ENCODE measurements at regions of chr16 and their contacts with region 1.

Region 1: GRCh38 chr16:31440516-31441184 is 1.9 kb downstream of the ZNF843 start:
- DNase-seq: no peak
- H3K4me3 ChIP-seq: no peak overlapping the region
- H3K27ac ChIP-seq: no peak overlapping the region
- H3K4me1 ChIP-seq: peaks cover 0 to 11% (median 4%) of the 10 kb centered on the region in 4 donors
- H3K27me3 ChIP-seq: no peaks in the 10 kb centered on the region
- CTCF ChIP-seq: no peak
- EP300 ChIP-seq: no peak
- POLR2A ChIP-seq: no peak

Region 2: GRCh38 chr16:30997000-30997886 is 443.4 kb before region 1 on chr16:
- in situ Hi-C with region 1: loop called in 3 of 4 experiments (anchors 10 to 25 kb)
- intact Hi-C with region 1: no loop called
- DNase-seq: peak; percentile 87
- H3K4me3 ChIP-seq: peak overlapping the region; percentile 39 to 56 (median 48)
- H3K27ac ChIP-seq: peak overlapping the region; percentile 77 to 89 (median 81)
- H3K4me1 ChIP-seq: peaks cover 6 to 18% (median 13%) of the 10 kb centered on the region in 4 donors
- H3K27me3 ChIP-seq: peaks cover 5% of the 10 kb centered on the region
- CTCF ChIP-seq: no peak
- EP300 ChIP-seq: no peak
- POLR2A ChIP-seq: peak; percentile 62

Region 3: GRCh38 chr16:31179747-31180459 is 260.7 kb before region 1 on chr16 and contains the start of gene FUS:
- in situ Hi-C with region 1: loop called in 1 of 4 experiments (anchors 25 kb)
- intact Hi-C with region 1: loop called (anchors 10 kb)
- DNase-seq: peak; percentile 94
- H3K4me3 ChIP-seq: peak within 1 kb of the TSS; percentile 70 to 99 (median 94)
- H3K27ac ChIP-seq: peak within 1 kb of the TSS; percentile 96 to 99 (median 98)
- H3K4me1 ChIP-seq: peaks cover 19 to 41% (median 32%) of the 10 kb centered on the region in 4 donors
- H3K27me3 ChIP-seq: no peaks in the 10 kb centered on the region
- CTCF ChIP-seq: no peak
- EP300 ChIP-seq: no peak
- POLR2A ChIP-seq: peak; percentile 100
- total RNA-seq, gene FUS: 43.6 to 116 (median 59.0) TPM

Region 4: GRCh38 chr16:31196324-31197088 is 244.1 kb before region 1 on chr16:
- in situ Hi-C with region 1: loop called in 2 of 4 experiments (anchors 10 to 25 kb)
- intact Hi-C with region 1: no loop called
- DNase-seq: no peak
- H3K4me3 ChIP-seq: no peak overlapping the region
- H3K27ac ChIP-seq: no peak overlapping the region
- H3K4me1 ChIP-seq: peaks cover 7 to 19% (median 11%) of the 10 kb centered on the region in 4 donors
- H3K27me3 ChIP-seq: no peaks in the 10 kb centered on the region
- CTCF ChIP-seq: no peak
- EP300 ChIP-seq: no peak
- POLR2A ChIP-seq: no peak

Region 5: DNA sequence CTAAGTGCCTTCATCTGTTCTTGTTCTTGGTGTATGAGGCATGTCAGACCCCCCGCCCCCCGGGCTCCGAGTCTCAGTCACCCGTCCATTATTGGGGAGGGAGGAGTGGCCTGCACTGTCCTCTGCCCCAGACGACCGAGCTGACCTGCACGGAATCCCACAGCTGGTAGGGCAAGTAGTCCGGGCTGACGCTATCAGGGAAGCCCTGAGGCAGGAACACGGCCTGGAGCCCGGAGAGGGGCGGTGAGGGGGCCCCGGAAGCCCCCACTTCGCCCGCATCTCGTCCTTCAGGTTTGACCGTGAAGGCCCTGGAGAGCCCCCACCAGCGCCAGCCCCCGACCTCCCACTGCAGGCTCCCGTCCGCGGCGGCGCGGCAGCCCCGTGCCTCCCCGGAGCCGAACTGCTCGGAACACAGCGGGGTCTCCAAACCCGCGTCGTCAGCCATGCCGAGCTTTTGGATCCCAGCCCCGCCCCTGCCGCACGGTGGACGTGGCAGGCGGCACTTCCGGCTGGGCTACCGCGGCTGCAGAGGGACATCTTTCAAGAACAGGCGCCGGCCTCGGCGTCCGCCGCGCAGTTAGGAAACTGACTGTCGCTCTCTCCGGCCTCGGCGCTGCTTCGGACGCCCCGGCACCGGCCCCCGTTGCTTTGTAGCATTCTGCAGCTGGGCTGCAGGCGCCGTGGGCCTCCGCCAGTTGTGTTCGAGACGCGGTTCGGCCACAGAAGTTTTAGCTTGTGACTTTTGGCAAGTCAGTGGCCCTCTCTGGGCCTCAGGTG is 67.5 kb after region 1 on chr16 and contains the start of gene RUSF1:
- in situ Hi-C with region 1: no loop called
- intact Hi-C with region 1: no loop called
- DNase-seq: peak; percentile 93
- H3K4me3 ChIP-seq: peak within 1 kb of the TSS; percentile 85 to 93 (median 89)
- H3K27ac ChIP-seq: peak within 1 kb of the TSS; percentile 93 to 95 (median 94)
- H3K4me1 ChIP-seq: peaks cover 17 to 36% (median 23%) of the 10 kb centered on the region in 4 donors
- H3K27me3 ChIP-seq: no peaks in the 10 kb centered on the region
- CTCF ChIP-seq: no peak
- EP300 ChIP-seq: no peak
- POLR2A ChIP-seq: peak; percentile 87
- total RNA-seq, gene RUSF1: 49.2 to 86.5 (median 71.3) TPM

Measured in transverse colon (tissue), 4 donors.